ENCODE measurements at regions of chr2 and their contacts with region 1.

Region 1: GRCh38 chr2:177164584-177165052 is 48.0 kb upstream of the HNRNPA3 start:
- DNase-seq: peak; percentile 86 to 93
- H3K4me3 ChIP-seq: peak overlapping the region; percentile 36 to 41 (median 38)
- H3K27ac ChIP-seq: peak overlapping the region in 4 of 5 donors; percentile 65 to 86 (median 84)
- H3K4me1 ChIP-seq: peaks cover 0 to 36% (median 24%) of the 10 kb centered on the region in 4 donors
- H3K27me3 ChIP-seq: no peaks in the 10 kb centered on the region
- CTCF ChIP-seq: peak in 6 of 7 experiments; percentile 58 to 100 (median 99)
- EP300 ChIP-seq: no peak
- POLR2A ChIP-seq: no peak

Region 2: DNA sequence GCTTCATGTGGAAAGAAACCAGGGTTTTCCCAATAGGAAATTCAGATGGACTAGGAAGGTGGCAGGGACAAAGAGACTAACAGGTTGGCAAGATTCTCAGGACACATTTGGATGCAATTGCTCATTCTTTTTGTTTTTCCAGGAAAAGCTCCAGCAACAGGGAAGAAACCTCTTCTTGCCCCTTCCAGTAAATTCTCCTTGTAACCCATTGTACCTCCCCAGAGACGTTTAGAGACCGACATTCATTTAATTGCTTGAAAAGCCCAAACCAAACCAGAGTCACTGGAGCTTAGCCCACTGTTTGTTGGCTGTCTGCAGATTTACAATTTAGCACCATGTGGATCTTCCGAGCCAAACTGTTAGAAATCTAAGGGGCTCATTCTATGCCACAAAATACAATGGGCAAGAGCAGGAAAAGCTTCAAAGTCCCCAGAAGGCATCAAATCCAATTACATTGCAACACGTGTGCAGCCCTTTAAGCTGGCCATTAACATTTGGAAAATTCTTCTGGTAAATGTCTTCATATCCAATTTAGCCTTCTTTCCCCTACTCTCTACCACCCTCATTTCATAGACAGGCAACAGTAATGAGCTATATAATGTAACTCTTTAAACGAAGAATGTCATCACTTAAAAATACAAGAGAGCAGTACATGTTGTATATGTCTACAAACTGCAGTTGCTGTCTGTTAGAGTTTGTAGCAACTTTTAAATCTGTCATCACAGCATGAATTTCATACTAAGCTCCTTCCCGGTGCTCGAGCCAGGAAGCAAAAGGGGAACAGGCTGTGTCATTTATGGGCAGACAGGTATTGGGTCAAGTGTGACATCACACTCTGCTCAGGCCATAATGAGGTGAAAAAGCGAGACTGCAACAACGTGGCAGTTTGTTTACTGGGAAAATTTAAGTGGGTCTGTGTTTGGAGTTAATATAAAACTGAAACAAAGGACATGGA is 187.6 kb before region 1 on chr2:
- intact Hi-C with region 1: no loop called
- DNase-seq: no peak
- H3K4me3 ChIP-seq: no peak overlapping the region
- H3K27ac ChIP-seq: no peak overlapping the region
- H3K4me1 ChIP-seq: no peaks in the 10 kb centered on the region
- H3K27me3 ChIP-seq: peaks cover 0 to 4% (median 0%) of the 10 kb centered on the region in 3 donors
- CTCF ChIP-seq: no peak
- EP300 ChIP-seq: no peak
- POLR2A ChIP-seq: no peak

Region 3: GRCh38 chr2:177254433-177255226 is 90.0 kb after region 1 on chr2:
- intact Hi-C with region 1: no loop called
- DNase-seq: peak; percentile 67 to 85
- H3K4me3 ChIP-seq: peak overlapping the region in 2 of 4 donors; percentile 12 to 18
- H3K27ac ChIP-seq: peak overlapping the region in 4 of 5 donors; percentile 36 to 82 (median 52)
- H3K4me1 ChIP-seq: peaks cover 71 to 100% (median 97%) of the 10 kb centered on the region in 4 donors
- H3K27me3 ChIP-seq: no peaks in the 10 kb centered on the region
- CTCF ChIP-seq: peak in 3 of 7 experiments; percentile 11 to 35 (median 24)
- EP300 ChIP-seq: no peak
- POLR2A ChIP-seq: no peak

Region 4: DNA sequence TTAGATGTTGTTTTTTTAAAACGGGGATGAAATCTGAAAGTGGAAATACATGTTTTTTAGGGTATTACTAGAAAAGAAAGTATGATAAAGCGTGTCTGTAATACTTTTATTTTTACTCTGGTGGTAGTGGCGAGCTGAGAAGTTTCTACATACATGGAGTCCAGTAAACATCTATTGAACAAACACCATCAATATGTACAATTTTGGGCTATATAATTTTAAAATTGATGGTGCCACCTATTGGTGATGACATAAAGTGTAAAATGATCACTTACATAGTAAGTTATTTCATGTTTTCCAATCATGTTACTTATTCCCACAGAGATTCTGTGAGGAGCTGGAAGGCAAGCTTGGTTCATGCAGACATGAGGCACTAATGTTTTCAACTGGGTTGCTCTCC is 131.4 kb after region 1 on chr2:
- intact Hi-C with region 1: loop called (anchors 10 kb)
- DNase-seq: peak in 1 of 2 donors; percentile 48
- H3K4me3 ChIP-seq: no peak overlapping the region
- H3K27ac ChIP-seq: peak overlapping the region in 3 of 5 donors; percentile 54 to 64 (median 60)
- H3K4me1 ChIP-seq: peaks cover 7 to 16% (median 14%) of the 10 kb centered on the region in 4 donors
- H3K27me3 ChIP-seq: no peaks in the 10 kb centered on the region
- CTCF ChIP-seq: peak in 4 of 7 experiments; percentile 24 to 41 (median 36)
- EP300 ChIP-seq: no peak
- POLR2A ChIP-seq: no peak

Region 5: GRCh38 chr2:177325270-177325929 is 160.8 kb after region 1 on chr2:
- intact Hi-C with region 1: loop called (anchors 10 kb)
- DNase-seq: peak in 1 of 2 donors; percentile 33
- H3K4me3 ChIP-seq: no peak overlapping the region
- H3K27ac ChIP-seq: peak overlapping the region in 1 of 5 donors; percentile 0
- H3K4me1 ChIP-seq: peaks cover 0 to 34% (median 10%) of the 10 kb centered on the region in 4 donors
- H3K27me3 ChIP-seq: no peaks in the 10 kb centered on the region
- CTCF ChIP-seq: no peak
- EP300 ChIP-seq: no peak
- POLR2A ChIP-seq: no peak

Measured in stomach (tissue), 19 donors.